Spleen (tissue), 13 donors: ENCODE measurements at regions of chr5 and their contacts with region 1.

Region 1: GRCh38 chr5:38193015-38193581 is 65.3 kb upstream of the EGFLAM start:
- DNase-seq: peak; percentile 84
- H3K4me3 ChIP-seq: no peak overlapping the region
- H3K27ac ChIP-seq: no peak overlapping the region
- H3K4me1 ChIP-seq: peaks cover 0 to 6% (median 0%) of the 10 kb centered on the region in 6 donors
- H3K27me3 ChIP-seq: peaks cover 0 to 33% (median 0%) of the 10 kb centered on the region in 7 donors
- CTCF ChIP-seq: peak; percentile 55 to 90 (median 81)
- POLR2A ChIP-seq: no peak

Region 2: DNA sequence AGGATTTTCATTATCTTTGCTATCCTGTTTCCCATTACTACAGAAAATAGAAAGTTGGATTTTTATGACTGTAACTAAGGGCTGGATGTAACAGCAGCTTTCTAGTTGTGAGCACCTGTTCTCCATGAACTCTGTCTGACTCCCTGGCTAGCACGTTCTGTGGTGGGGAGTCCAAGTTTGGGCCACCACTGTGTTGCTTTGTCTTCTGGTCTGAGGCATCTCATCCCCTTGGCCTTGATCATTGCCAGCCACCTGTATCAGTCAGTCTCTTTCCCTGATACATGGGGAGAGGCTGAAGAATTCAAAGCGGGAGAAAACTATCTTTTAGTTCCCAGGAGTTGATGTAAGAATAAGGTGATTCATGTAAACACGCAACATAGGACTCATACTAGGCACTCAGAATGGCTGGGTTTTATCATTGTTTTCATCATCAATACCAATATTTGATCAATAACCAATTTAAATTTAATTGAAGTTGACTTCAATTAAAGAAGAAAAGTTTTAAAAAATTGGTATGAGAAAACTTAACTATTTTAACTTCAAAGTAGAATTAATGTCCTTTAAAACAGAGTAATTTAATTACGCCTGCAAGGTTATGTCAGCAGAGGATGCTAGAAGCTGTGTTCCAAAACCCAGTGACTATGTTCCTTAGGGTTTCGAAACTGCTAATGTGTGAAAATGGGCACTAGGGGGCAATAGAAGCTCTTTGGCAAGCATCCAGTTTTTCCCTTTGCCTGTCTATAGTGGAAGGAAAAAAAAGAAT is 780.4 kb before region 1 on chr5:
- intact Hi-C with region 1: loop called (anchors 10 kb)
- DNase-seq: no peak
- H3K4me3 ChIP-seq: no peak overlapping the region
- H3K27ac ChIP-seq: no peak overlapping the region
- H3K4me1 ChIP-seq: no peaks in the 10 kb centered on the region
- H3K27me3 ChIP-seq: no peaks in the 10 kb centered on the region
- CTCF ChIP-seq: peak; percentile 25 to 83 (median 67)
- POLR2A ChIP-seq: no peak

Region 3: GRCh38 chr5:37837414-37838032 is 355.6 kb before region 1 on chr5:
- intact Hi-C with region 1: loop called (anchors 2 kb)
- DNase-seq: peak; percentile 84
- H3K4me3 ChIP-seq: peak overlapping the region in 7 of 8 donors; percentile 11 to 61 (median 22)
- H3K27ac ChIP-seq: peak overlapping the region in 1 of 8 donors; percentile 26
- H3K4me1 ChIP-seq: peaks cover 24 to 71% (median 53%) of the 10 kb centered on the region in 6 donors
- H3K27me3 ChIP-seq: peaks cover 3 to 100% (median 93%) of the 10 kb centered on the region in 7 donors
- CTCF ChIP-seq: peak; percentile 35 to 83 (median 75)
- POLR2A ChIP-seq: no peak

Region 4: GRCh38 chr5:38382898-38383297 is 189.8 kb after region 1 on chr5:
- intact Hi-C with region 1: no loop called
- DNase-seq: peak; percentile 76
- H3K4me3 ChIP-seq: no peak overlapping the region
- H3K27ac ChIP-seq: no peak overlapping the region
- H3K4me1 ChIP-seq: peaks cover 0 to 4% (median 0%) of the 10 kb centered on the region in 6 donors
- H3K27me3 ChIP-seq: peaks cover 0 to 38% (median 6%) of the 10 kb centered on the region in 7 donors
- CTCF ChIP-seq: peak in 10 of 11 experiments; percentile 25 to 84 (median 72)
- POLR2A ChIP-seq: no peak